Activated B cell treated with CpG ODN at 0.5 μM for 24 hours (primary cell): ENCODE measurements at regions of chr2 and their contacts with region 1.

Region 1: DNA sequence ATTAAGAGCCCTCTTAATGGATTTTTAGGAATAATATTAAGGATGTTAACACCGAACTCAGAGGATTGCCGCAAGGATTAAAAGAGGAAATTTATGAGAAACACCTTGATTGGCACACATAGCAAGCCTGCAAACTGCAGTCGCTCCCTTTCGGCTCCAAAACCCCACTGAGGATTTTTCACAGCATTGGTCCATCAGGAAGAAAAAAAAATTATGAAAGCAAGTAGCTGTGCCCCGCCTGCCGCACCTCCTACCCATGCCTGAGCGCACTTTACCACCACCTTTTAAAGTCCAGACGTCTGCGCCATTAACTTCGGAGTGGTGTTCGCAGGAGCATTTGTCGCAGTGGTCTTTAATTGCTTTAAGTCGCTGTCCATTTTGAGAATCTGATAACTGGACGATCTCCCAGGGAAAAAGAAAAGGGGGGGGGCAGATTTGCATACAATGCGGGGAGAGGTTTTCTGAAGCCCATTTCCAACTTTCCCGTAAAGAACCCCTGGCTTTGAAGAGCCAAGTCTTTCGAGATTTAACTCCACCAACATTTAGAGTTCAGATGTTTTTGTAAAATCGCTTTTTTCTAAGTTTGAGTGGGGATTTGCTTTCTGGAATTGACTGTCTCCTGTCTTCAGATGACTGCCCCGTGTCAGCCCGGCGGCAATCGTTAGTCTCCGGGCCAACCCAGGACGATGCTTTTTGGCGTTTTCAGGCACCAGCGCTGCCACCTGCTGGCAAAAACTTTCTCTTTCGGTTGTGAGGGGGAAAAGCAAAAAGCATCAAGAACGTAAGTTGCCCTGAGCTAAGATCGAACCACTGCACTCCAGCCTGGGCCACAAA is 914 bp upstream of the TRABD2A start:
- DNase-seq: peak; percentile 75
- ATAC-seq: peak; percentile 75
- H3K4me3 Mint-ChIP-seq: peak overlapping the region; percentile 94
- H3K27ac Mint-ChIP-seq: peak overlapping the region; percentile 93
- H3K4me1 Mint-ChIP-seq: peaks cover 40% of the 10 kb centered on the region
- H3K27me3 Mint-ChIP-seq: no peaks in the 10 kb centered on the region
- CTCF ChIP-seq: no peak

Region 2: GRCh38 chr2:84516234-84516986 is 365.4 kb before region 1 on chr2 and contains the start of gene DNAH6:
- CTCF ChIA-PET with region 1: interaction called, 3 read pairs
- POLR2A ChIA-PET with region 1: no interaction called
- intact Hi-C with region 1: loop called (anchors 5 kb)
- DNase-seq: peak; percentile 55
- ATAC-seq: peak; percentile 96
- H3K4me3 Mint-ChIP-seq: peak within 1 kb of the TSS; percentile 81
- H3K27ac Mint-ChIP-seq: peak within 1 kb of the TSS; percentile 46
- H3K4me1 Mint-ChIP-seq: peaks cover 6% of the 10 kb centered on the region
- H3K27me3 Mint-ChIP-seq: peaks cover 15% of the 10 kb centered on the region
- CTCF ChIP-seq: no peak
- total RNA-seq, gene DNAH6: 0.34 and 0.82 TPM in 2 replicates

Region 3: GRCh38 chr2:84817239-84817655 is 64.6 kb before region 1 on chr2:
- CTCF ChIA-PET with region 1: interaction called, 3 read pairs
- POLR2A ChIA-PET with region 1: interaction called, 4 read pairs
- intact Hi-C with region 1: loop called (anchors 2 kb)
- DNase-seq: no peak
- ATAC-seq: peak; percentile 80
- H3K4me3 Mint-ChIP-seq: peak overlapping the region; percentile 29
- H3K27ac Mint-ChIP-seq: peak overlapping the region; percentile 78
- H3K4me1 Mint-ChIP-seq: peaks cover 27% of the 10 kb centered on the region
- H3K27me3 Mint-ChIP-seq: peaks cover 2% of the 10 kb centered on the region
- CTCF ChIP-seq: no peak

Region 4: GRCh38 chr2:84851876-84852275 is 29.9 kb before region 1 on chr2:
- CTCF ChIA-PET with region 1: no interaction called
- POLR2A ChIA-PET with region 1: no interaction called
- intact Hi-C with region 1: no loop called
- DNase-seq: no peak
- ATAC-seq: no peak
- H3K4me3 Mint-ChIP-seq: no peak overlapping the region
- H3K27ac Mint-ChIP-seq: no peak overlapping the region
- H3K4me1 Mint-ChIP-seq: peaks cover 18% of the 10 kb centered on the region
- H3K27me3 Mint-ChIP-seq: no peaks in the 10 kb centered on the region
- CTCF ChIP-seq: no peak

Region 5: DNA sequence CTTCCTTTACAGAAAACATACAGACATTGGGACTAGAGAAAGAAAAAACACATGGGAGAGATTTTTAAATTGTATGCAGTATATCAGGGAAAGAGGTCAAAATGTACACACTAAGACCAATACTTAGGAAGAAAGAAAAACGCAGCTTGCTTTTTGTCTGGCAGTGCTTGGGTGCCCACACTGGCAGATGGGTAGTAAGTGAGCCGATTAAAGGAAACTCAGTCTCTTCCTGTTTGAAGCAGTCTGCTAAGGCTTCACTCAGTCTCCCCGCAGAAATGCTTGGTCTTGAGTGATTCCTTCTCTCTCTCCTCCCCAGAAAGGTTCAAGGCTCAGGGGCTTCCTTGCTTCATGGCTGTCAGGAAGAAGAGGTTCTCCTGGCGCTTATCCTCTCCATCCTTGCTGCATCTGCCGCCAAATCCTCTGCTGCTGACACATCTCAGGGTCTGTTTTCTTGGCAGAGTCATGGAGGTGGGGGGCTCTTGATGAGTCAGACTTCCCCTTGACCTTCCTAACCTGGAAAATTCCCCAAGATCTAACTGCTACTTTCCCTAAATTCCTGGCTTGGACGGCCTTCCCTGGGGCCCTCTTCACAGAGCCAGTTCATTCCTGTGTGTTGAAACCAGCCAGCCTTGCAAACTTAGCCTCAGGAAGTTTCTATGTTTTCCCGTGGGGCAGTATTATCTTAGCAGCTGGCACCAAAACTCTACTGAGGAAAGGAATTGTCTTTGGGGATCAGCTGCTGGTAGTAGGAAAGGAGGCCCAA is 13.1 kb after region 1 on chr2:
- CTCF ChIA-PET with region 1: interaction called, 10 read pairs
- POLR2A ChIA-PET with region 1: interaction called, 21 read pairs
- intact Hi-C with region 1: loop called (anchors 1 kb)
- DNase-seq: no peak
- ATAC-seq: peak; percentile 68
- H3K4me3 Mint-ChIP-seq: peak overlapping the region; percentile 60
- H3K27ac Mint-ChIP-seq: peak overlapping the region; percentile 89
- H3K4me1 Mint-ChIP-seq: peaks cover 46% of the 10 kb centered on the region
- H3K27me3 Mint-ChIP-seq: no peaks in the 10 kb centered on the region
- CTCF ChIP-seq: no peak

Region 6: GRCh38 chr2:84946204-84947009 is 64.6 kb after region 1 on chr2:
- CTCF ChIA-PET with region 1: interaction called, 9 read pairs
- POLR2A ChIA-PET with region 1: interaction called, 15 read pairs
- intact Hi-C with region 1: no loop called
- DNase-seq: peak; percentile 44
- ATAC-seq: peak; percentile 77
- H3K4me3 Mint-ChIP-seq: peak overlapping the region; percentile 72
- H3K27ac Mint-ChIP-seq: peak overlapping the region; percentile 97
- H3K4me1 Mint-ChIP-seq: peaks cover 54% of the 10 kb centered on the region
- H3K27me3 Mint-ChIP-seq: no peaks in the 10 kb centered on the region
- CTCF ChIP-seq: no peak